Activated naive CD4-positive, alpha-beta T cell treated with anti-CD3 and anti-CD28 coated beads for 36 hours (primary cell): ENCODE measurements at regions of chr19 and their contacts with region 1.

Region 1: GRCh38 chr19:46346821-46347571 is at the start of gene PPP5C:
- DNase-seq: peak; percentile 96
- H3K4me3 Mint-ChIP-seq: peak within 1 kb of the TSS; percentile 90
- H3K27ac Mint-ChIP-seq: peak within 1 kb of the TSS; percentile 88
- H3K4me1 Mint-ChIP-seq: peaks cover 42% of the 10 kb centered on the region
- H3K27me3 Mint-ChIP-seq: no peaks in the 10 kb centered on the region
- total RNA-seq, gene PPP5C: 87.4 to 89.2 TPM

Region 2: DNA sequence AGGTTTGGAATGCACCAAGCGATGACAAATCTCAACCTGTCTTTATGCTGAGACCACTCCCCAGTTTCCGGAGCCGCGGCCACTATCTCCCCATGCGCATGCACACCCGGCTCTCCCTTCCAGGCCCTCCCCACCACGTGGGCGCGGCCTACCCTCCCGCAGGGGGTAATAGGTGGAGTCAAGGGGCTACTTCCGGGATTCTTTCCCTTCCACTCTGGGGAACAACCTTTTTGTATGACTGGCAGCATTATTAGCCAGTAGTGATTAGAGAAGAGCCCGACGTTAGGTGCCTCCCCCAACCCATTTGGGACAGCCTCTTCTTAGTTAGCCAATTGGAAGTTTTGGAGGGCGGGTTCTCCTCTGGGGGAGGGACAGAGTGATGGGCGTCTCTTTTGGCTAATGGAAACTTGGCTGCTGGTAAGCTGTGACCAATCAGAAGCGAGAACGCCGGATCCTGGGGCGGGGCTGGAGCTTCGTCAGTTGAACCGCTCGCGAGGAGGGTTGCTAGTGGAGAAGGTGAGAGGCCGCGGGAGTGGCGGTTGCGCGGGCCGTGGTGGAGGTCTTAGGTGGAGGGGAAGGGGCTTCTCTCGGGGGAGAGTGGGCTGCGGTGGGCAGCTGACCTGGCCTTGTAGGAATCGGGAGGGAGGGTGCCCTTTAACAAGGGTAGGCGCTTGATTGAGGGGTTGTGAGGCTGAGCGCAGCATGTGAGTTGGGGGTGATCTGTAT is 351.8 kb before region 1 on chr19 and contains the start of gene CCDC61:
- CTCF ChIA-PET with region 1: no interaction called
- intact Hi-C with region 1: loop called (anchors 1 kb)
- DNase-seq: peak; percentile 98
- H3K4me3 Mint-ChIP-seq: peak within 1 kb of the TSS; percentile 40
- H3K27ac Mint-ChIP-seq: no peak within 1 kb of the TSS
- H3K4me1 Mint-ChIP-seq: peaks cover 23% of the 10 kb centered on the region
- H3K27me3 Mint-ChIP-seq: no peaks in the 10 kb centered on the region
- total RNA-seq, gene CCDC61: 26.4 to 29.3 TPM

Region 3: GRCh38 chr19:46283771-46284170 is 63.2 kb before region 1 on chr19:
- CTCF ChIA-PET with region 1: interaction called, 4 read pairs
- intact Hi-C with region 1: loop called (anchors 2 kb)
- DNase-seq: no peak
- H3K4me3 Mint-ChIP-seq: no peak overlapping the region
- H3K27ac Mint-ChIP-seq: no peak overlapping the region
- H3K4me1 Mint-ChIP-seq: no peaks in the 10 kb centered on the region
- H3K27me3 Mint-ChIP-seq: peaks cover 5% of the 10 kb centered on the region

Region 4: DNA sequence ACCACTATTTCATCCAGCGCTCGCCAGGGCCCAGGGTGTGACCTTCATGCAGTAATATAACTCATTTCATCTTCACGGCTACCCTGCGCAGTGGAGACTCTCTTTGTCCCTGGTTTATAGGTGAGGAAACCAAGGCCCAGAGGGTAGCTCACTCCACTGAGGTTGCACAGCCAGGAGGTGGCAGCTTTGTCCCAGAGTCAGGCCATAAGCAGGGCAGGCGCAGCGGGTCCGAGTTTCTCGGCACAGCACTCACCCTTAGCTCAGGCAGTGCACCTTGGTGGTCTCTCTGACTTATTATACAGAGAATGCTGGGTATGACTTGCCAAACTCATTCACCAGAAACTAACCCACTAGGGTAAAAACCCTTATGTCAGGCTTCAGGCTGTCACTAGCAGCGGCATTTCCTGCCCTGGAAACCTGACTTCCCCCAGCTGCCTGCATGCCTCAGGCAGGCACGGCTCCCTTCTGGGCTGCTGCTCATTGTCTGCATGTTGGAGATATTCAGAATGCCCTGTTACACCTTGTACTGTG is 24.4 kb after region 1 on chr19:
- CTCF ChIA-PET with region 1: no interaction called
- intact Hi-C with region 1: loop called (anchors 2 kb)
- DNase-seq: peak; percentile 34
- H3K4me3 Mint-ChIP-seq: no peak overlapping the region
- H3K27ac Mint-ChIP-seq: no peak overlapping the region
- H3K4me1 Mint-ChIP-seq: peaks cover 20% of the 10 kb centered on the region
- H3K27me3 Mint-ChIP-seq: no peaks in the 10 kb centered on the region

Region 5: DNA sequence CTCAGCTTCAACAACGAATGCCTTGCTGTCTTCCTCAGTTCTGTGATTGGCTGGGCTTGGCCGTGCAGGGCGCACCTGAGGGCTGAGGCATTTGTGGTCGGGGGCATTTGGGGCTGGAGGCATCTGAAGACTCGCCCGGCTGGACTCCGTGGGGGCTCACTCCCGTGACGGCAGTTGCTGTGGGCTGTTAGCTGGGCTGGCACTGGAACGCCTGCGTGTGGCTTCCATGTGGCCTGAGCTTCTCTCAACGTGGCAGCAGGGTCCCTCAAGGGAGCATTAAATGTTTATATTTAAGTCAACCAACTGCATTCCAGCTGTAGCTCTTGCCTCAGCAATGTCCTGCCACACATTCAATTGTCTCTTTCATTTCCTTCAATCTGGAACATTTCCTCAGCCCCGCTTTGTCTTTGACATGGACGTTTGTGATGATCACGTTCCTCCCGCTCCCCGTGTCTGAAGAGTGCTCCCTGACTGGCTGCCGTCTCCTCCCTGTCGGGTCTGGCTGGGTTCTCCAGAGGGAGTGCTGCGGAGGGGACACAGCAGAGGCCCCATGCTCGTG is 45.3 kb after region 1 on chr19:
- CTCF ChIA-PET with region 1: interaction called, 6 read pairs
- intact Hi-C with region 1: loop called (anchors 2 kb)
- DNase-seq: no peak
- H3K4me3 Mint-ChIP-seq: no peak overlapping the region
- H3K27ac Mint-ChIP-seq: no peak overlapping the region
- H3K4me1 Mint-ChIP-seq: peaks cover 1% of the 10 kb centered on the region
- H3K27me3 Mint-ChIP-seq: no peaks in the 10 kb centered on the region

Region 6: GRCh38 chr19:46487802-46488445 is 140.9 kb after region 1 on chr19:
- CTCF ChIA-PET with region 1: no interaction called
- intact Hi-C with region 1: loop called (anchors 2 kb)
- DNase-seq: peak; percentile 82
- H3K4me3 Mint-ChIP-seq: no peak overlapping the region
- H3K27ac Mint-ChIP-seq: no peak overlapping the region
- H3K4me1 Mint-ChIP-seq: peaks cover 28% of the 10 kb centered on the region
- H3K27me3 Mint-ChIP-seq: peaks cover 54% of the 10 kb centered on the region

Region 7: DNA sequence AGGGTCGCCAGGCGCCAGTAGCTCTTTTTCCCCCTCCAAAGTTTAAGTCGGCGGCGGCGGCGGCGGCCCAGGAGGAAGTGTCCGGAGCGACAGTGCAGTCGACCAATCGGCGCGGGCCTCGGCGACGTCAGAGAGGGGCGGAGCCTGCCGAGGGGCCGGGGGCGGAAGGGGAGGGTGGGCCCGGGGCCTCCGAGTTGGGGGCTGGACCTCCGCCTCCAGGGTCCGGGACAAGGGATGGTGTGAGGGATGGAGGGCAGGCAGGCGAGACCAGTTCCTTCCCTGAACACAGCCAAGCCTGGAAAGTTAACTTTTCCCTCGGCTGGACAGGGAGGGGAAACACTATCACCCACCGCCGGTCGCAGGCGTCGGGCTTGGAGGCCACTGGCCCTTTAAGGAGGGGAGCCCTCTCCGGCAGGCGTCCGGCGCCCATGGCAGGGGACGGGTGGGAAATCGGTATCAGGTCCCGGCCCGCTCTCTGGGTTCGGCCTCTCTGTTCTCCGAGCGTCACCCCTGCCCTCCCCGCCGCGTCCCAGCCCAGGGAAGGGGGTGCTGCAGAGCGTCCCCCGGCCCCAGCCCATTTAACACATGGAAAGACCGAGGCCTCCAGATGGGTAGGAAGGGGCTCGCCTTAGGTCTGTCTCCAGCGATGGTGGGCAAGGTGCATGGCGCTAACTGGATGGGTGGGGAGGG is 370.2 kb after region 1 on chr19 and contains the start of gene PRKD2:
- CTCF ChIA-PET with region 1: no interaction called
- intact Hi-C with region 1: loop called (anchors 2 kb)
- DNase-seq: peak; percentile 93
- H3K4me3 Mint-ChIP-seq: peak within 1 kb of the TSS; percentile 96
- H3K27ac Mint-ChIP-seq: peak within 1 kb of the TSS; percentile 94
- H3K4me1 Mint-ChIP-seq: peaks cover 46% of the 10 kb centered on the region
- H3K27me3 Mint-ChIP-seq: no peaks in the 10 kb centered on the region
- total RNA-seq, gene PRKD2: 62.2 to 62.3 TPM